Activated CD4-positive, alpha-beta memory T cell treated with anti-CD3 and anti-CD28 coated beads for 36 hours (primary cell): ENCODE measurements at regions of chr3 and their contacts with region 1.

Region 1: DNA sequence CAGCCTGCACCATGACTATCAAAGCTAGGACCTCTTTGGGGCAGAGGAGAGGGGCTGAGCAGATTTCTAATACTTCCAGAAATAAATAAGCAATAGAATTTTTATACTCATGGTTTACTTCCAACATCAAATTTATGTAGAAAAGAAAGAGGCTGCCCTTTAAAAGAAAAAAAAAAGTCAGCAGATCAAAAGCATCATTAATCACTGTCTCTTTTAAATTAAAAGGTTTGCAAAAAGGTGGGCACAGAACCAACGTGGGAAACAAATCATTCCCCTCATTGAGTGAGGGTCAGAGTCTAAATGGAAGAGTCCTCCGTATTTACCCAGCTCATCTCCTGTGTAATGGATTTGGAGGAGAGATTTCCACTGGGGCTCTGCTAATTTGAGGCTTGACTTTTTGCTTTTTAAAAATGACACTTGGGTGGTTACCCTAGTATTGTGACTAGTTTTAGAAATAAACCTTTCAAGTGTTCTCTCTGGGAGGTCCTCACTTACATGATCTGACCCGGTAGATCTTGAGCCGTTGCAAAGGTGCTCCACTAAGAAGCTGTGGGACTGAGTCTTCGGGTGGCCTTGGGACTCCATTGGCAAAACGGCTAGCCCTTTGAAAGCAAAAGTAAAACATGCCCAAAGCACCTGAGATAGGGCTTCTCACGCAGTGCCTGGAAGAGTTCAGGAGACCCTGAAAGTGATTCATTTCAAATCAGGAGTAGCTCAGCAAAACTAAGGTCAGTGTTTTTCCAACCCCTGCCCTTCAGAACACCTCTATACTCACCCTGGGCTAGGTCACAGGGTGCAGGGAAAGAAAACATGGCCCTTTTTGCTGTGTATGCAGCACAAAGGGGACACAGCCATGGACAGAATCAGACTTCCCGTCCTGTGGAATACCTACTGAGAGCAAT is 320.9 kb downstream of the FOXP1 start:
- DNase-seq: no peak
- H3K4me3 Mint-ChIP-seq: no peak overlapping the region
- H3K27ac Mint-ChIP-seq: peak overlapping the region; percentile 43
- H3K4me1 Mint-ChIP-seq: peaks cover 62% of the 10 kb centered on the region
- H3K27me3 Mint-ChIP-seq: no peaks in the 10 kb centered on the region

Region 2: GRCh38 chr3:71299160-71299559 is 36.5 kb after region 1 on chr3:
- CTCF ChIA-PET with region 1: no interaction called
- POLR2A ChIA-PET with region 1: no interaction called
- intact Hi-C with region 1: loop called (anchors 5 kb)
- DNase-seq: peak; percentile 42
- H3K4me3 Mint-ChIP-seq: no peak overlapping the region
- H3K27ac Mint-ChIP-seq: peak overlapping the region; percentile 52
- H3K4me1 Mint-ChIP-seq: peaks cover 79% of the 10 kb centered on the region
- H3K27me3 Mint-ChIP-seq: no peaks in the 10 kb centered on the region